Naive thymus-derived CD4-positive, alpha-beta T cell (primary cell): ENCODE measurements at regions of chr2 and their contacts with region 1.

Region 1: DNA sequence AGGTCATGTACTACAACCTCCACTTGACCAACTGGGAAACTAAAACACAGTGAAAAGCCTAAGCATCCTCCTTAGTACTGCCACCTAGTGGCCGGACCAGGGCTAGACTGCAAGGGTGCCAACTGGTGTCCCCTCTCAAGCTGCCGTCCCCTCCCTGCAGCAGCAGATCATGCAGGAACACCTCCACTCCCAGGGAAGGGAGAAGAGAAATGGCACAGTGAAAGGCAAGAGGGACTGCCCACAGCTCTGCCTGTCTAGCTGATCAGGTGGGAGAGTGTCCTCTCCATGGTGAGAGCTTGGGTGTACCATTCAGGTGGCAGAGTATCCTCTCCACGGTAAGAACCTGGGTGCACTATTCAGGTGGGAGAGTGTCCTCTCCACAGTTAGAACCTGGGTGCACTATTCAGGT is 78.1 kb downstream of the AAK1 start:
- DNase-seq: peak; percentile 39 to 75 (median 51)
- ATAC-seq: peak; percentile 88
- H3K4me3 ChIP-seq: no peak overlapping the region
- H3K4me3 Mint-ChIP-seq: peak overlapping the region in 9 of 10 donors; percentile 63 to 84 (median 75)
- H3K27ac ChIP-seq: no peak overlapping the region
- H3K27ac Mint-ChIP-seq: peak overlapping the region; percentile 36 to 94 (median 77)
- H3K4me1 ChIP-seq: peaks cover 35 to 74% of the 10 kb centered on the region in 2 donors
- H3K4me1 Mint-ChIP-seq: peaks cover 63 to 99% (median 96%) of the 10 kb centered on the region in 7 donors
- H3K27me3 ChIP-seq: no peaks in the 10 kb centered on the region
- H3K27me3 Mint-ChIP-seq: no peaks in the 10 kb centered on the region

Region 2: GRCh38 chr2:69581774-69582581 is 16.5 kb after region 1 on chr2:
- CTCF ChIA-PET with region 1: interaction called, 48 read pairs
- POLR2A ChIA-PET with region 1: interaction called, 5 read pairs
- intact Hi-C with region 1: loop called in 1 of 2 experiments (anchors 2 kb)
- DNase-seq: peak in 4 of 9 donors; percentile 15 to 27 (median 24)
- ATAC-seq: peak; percentile 41
- H3K4me3 ChIP-seq: no peak overlapping the region
- H3K4me3 Mint-ChIP-seq: peak overlapping the region; percentile 26 to 82 (median 75)
- H3K27ac ChIP-seq: peak overlapping the region; percentile 34
- H3K27ac Mint-ChIP-seq: peak overlapping the region in 8 of 9 donors; percentile 30 to 94 (median 87)
- H3K4me1 ChIP-seq: peaks cover 42 to 87% of the 10 kb centered on the region in 2 donors
- H3K4me1 Mint-ChIP-seq: peaks cover 73 to 98% (median 96%) of the 10 kb centered on the region in 7 donors
- H3K27me3 ChIP-seq: no peaks in the 10 kb centered on the region
- H3K27me3 Mint-ChIP-seq: no peaks in the 10 kb centered on the region

Region 3: DNA sequence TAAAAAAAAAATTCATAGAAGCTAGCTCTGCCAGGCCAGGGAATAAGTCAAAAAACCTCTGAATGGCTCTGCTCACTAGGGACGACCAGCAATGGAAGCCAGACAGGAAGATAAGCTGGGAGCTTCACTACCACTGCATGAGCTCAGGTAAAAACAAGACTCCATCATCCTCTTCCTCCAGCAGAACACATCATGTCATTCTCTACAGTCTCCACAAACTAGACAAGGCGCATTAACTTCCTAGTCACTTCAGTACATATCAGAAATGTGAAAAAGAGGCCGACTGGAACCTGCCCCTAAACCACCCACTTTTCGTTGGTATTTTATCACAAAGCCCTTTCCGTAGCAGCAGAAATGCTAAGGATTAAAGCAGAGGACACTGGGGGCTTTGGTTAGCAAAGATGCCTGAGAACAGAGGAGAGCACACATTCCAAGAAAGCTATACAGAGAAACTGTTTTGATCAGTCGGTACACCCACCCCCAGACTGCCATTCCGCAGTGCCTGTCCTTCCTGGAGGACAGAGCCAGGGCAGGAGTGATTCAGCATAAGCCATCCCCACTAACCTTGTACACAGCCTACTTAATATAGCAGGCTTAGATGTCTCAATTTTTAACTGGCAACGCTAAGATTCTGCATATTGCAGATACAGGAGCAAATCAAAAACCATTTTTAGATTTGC is 24.7 kb after region 1 on chr2:
- CTCF ChIA-PET with region 1: interaction called, 18 read pairs
- POLR2A ChIA-PET with region 1: interaction called, 3 read pairs
- intact Hi-C with region 1: no loop called
- DNase-seq: peak in 2 of 9 donors; percentile 10 to 25
- ATAC-seq: peak; percentile 38
- H3K4me3 ChIP-seq: no peak overlapping the region
- H3K4me3 Mint-ChIP-seq: peak overlapping the region in 9 of 10 donors; percentile 55 to 77 (median 69)
- H3K27ac ChIP-seq: peak overlapping the region; percentile 25
- H3K27ac Mint-ChIP-seq: peak overlapping the region; percentile 54 to 92 (median 81)
- H3K4me1 ChIP-seq: peaks cover 14 to 58% of the 10 kb centered on the region in 2 donors
- H3K4me1 Mint-ChIP-seq: peaks cover 59 to 93% (median 87%) of the 10 kb centered on the region in 7 donors
- H3K27me3 ChIP-seq: no peaks in the 10 kb centered on the region
- H3K27me3 Mint-ChIP-seq: no peaks in the 10 kb centered on the region

Region 4: DNA sequence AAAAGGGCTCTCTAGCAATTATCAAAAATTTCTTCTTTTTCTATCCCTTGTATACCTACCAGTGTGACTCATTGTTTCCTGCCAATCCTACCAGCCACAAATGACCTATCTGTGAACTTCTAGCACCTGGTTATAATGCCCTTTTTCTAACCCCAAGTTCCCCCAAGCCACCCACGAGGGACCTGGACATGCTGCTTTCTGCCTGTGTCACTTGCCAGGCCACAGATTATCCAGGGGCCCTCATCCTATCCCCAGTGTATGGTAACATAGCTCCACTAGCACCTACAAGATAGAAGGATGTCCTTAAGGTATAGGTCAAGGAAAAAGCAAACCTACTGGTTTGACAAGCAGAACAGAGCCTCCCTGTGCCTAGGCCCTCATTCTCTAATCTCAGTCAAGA is 51.3 kb after region 1 on chr2:
- CTCF ChIA-PET with region 1: interaction called, 5 read pairs
- POLR2A ChIA-PET with region 1: interaction called, 4 read pairs
- intact Hi-C with region 1: loop called in 1 of 2 experiments (anchors 2 kb)
- DNase-seq: peak in 1 of 9 donors; percentile 45
- ATAC-seq: no peak
- H3K4me3 ChIP-seq: no peak overlapping the region
- H3K4me3 Mint-ChIP-seq: peak overlapping the region in 6 of 10 donors; percentile 8 to 52 (median 34)
- H3K27ac ChIP-seq: no peak overlapping the region
- H3K27ac Mint-ChIP-seq: peak overlapping the region in 6 of 9 donors; percentile 22 to 90 (median 70)
- H3K4me1 ChIP-seq: peaks cover 63 to 68% of the 10 kb centered on the region in 2 donors
- H3K4me1 Mint-ChIP-seq: peaks cover 0 to 45% (median 33%) of the 10 kb centered on the region in 7 donors
- H3K27me3 ChIP-seq: no peaks in the 10 kb centered on the region
- H3K27me3 Mint-ChIP-seq: no peaks in the 10 kb centered on the region

Region 5: DNA sequence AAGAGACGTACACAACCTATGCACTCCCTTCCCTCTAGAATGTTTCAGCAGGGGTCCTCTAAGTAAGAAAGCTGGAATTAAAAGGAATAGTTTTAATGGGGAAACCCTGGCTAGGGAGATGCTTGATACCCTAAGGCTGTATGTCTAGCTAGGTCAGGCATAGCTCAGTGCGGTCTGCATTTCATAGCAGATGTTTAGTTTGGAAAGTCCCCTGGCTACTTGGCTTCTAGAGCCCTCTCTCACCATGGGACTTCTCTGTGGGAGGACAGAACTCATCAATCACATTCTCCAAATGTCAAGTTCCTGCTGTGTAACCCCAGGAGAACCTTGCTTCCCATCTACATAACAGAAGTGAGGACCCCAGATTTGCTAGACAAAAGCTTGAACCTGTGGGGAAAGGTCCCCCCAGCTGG is 152.4 kb after region 1 on chr2:
- CTCF ChIA-PET with region 1: interaction called, 33 read pairs
- POLR2A ChIA-PET with region 1: interaction called, 7 read pairs
- intact Hi-C with region 1: loop called in 1 of 2 experiments (anchors 1 kb)
- DNase-seq: no peak
- ATAC-seq: no peak
- H3K4me3 ChIP-seq: no peak overlapping the region
- H3K4me3 Mint-ChIP-seq: no peak overlapping the region
- H3K27ac ChIP-seq: no peak overlapping the region
- H3K27ac Mint-ChIP-seq: peak overlapping the region in 1 of 9 donors; percentile 42
- H3K4me1 ChIP-seq: peaks cover 4 to 5% of the 10 kb centered on the region in 2 donors
- H3K4me1 Mint-ChIP-seq: peaks cover 6 to 24% (median 17%) of the 10 kb centered on the region in 7 donors
- H3K27me3 ChIP-seq: no peaks in the 10 kb centered on the region
- H3K27me3 Mint-ChIP-seq: peaks cover 0 to 3% (median 0%) of the 10 kb centered on the region in 5 donors

Region 6: GRCh38 chr2:69781321-69782248 is 216.2 kb after region 1 on chr2:
- CTCF ChIA-PET with region 1: no interaction called
- POLR2A ChIA-PET with region 1: no interaction called
- intact Hi-C with region 1: no loop called
- DNase-seq: no peak
- ATAC-seq: peak; percentile 50
- H3K4me3 ChIP-seq: no peak overlapping the region
- H3K4me3 Mint-ChIP-seq: no peak overlapping the region
- H3K27ac ChIP-seq: no peak overlapping the region
- H3K27ac Mint-ChIP-seq: no peak overlapping the region
- H3K4me1 ChIP-seq: no peaks in the 10 kb centered on the region
- H3K4me1 Mint-ChIP-seq: peaks cover 0 to 24% (median 0%) of the 10 kb centered on the region in 7 donors
- H3K27me3 ChIP-seq: no peaks in the 10 kb centered on the region
- H3K27me3 Mint-ChIP-seq: no peaks in the 10 kb centered on the region

Region 7: DNA sequence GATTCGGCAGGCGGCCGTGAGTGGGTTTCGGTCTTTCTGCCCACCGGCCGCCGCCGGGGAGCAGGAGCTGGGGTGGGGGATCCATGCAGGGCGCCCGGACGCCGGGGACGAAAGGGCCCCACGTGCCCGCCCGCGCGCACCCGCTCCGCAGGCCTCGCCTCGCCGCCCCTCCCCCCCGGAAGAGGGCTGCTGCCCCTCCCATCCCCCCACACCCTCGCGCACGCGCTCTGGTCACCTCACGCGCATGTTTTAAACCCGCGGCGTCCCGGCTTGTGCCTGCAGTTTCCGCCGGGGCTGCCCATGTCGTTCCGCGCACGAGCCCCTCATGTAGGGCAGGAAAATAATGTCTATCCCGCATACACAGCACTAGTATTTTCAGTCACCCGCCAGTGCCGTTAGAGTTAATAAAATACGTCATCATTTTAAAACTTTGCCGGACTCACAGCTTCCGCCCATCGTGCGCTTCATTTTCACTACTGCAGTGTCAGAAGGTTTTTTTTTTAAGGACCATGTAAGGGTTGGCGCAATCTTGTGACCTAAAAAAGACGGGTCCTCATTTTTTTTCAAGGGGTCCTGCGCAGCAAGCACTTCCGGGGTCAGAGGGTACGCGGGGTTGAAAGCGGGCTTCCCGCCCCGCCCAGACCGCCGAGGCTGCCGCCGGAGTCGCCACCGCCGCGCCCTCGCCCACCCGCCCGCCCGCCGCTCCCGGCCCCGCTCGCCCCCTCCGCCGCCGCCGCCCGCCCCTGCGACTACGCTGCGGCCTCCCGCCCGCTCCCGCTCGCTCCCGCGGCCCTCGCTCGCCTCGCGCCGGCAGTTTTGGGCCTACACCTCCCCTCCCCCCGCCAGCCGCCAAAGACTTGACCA is 521.6 kb after region 1 on chr2 and contains the start of gene PCBP1:
- CTCF ChIA-PET with region 1: no interaction called
- POLR2A ChIA-PET with region 1: no interaction called
- intact Hi-C with region 1: no loop called
- DNase-seq: peak; percentile 94 to 100 (median 98)
- ATAC-seq: peak; percentile 83
- H3K4me3 ChIP-seq: peak within 1 kb of the TSS; percentile 86
- H3K4me3 Mint-ChIP-seq: peak within 1 kb of the TSS; percentile 91 to 98 (median 97)
- H3K27ac ChIP-seq: peak within 1 kb of the TSS; percentile 100
- H3K27ac Mint-ChIP-seq: peak within 1 kb of the TSS; percentile 99 to 100 (median 100)
- H3K4me1 ChIP-seq: peaks cover 55 to 59% of the 10 kb centered on the region in 2 donors
- H3K4me1 Mint-ChIP-seq: peaks cover 40 to 67% (median 59%) of the 10 kb centered on the region in 7 donors
- H3K27me3 ChIP-seq: no peaks in the 10 kb centered on the region
- H3K27me3 Mint-ChIP-seq: peaks cover 0 to 4% (median 0%) of the 10 kb centered on the region in 5 donors
- total RNA-seq, gene PCBP1: 257 to 487 (median 368) TPM